Activated B cell treated with CpG ODN at 0.5 μM for 24 hours (primary cell): ENCODE measurements at regions of chr12 and their contacts with region 1.

Region 1: GRCh38 chr12:6330192-6330591 is 11.7 kb downstream of the TNFRSF1A start:
- DNase-seq: peak; percentile 50
- ATAC-seq: peak; percentile 100
- H3K4me3 Mint-ChIP-seq: no peak overlapping the region
- H3K27ac Mint-ChIP-seq: peak overlapping the region; percentile 12
- H3K4me1 Mint-ChIP-seq: peaks cover 15% of the 10 kb centered on the region
- H3K27me3 Mint-ChIP-seq: peaks cover 57% of the 10 kb centered on the region
- CTCF ChIP-seq: no peak

Region 2: GRCh38 chr12:6295094-6295811 is 34.9 kb before region 1 on chr12:
- CTCF ChIA-PET with region 1: no interaction called
- POLR2A ChIA-PET with region 1: no interaction called
- intact Hi-C with region 1: loop called (anchors 2 kb)
- DNase-seq: no peak
- ATAC-seq: no peak
- H3K4me3 Mint-ChIP-seq: no peak overlapping the region
- H3K27ac Mint-ChIP-seq: no peak overlapping the region
- H3K4me1 Mint-ChIP-seq: peaks cover 13% of the 10 kb centered on the region
- H3K27me3 Mint-ChIP-seq: peaks cover 41% of the 10 kb centered on the region
- CTCF ChIP-seq: no peak